Right cardiac atrium (tissue), 5 donors: ENCODE measurements at regions of chr18 and their contacts with region 1.

Region 1: DNA sequence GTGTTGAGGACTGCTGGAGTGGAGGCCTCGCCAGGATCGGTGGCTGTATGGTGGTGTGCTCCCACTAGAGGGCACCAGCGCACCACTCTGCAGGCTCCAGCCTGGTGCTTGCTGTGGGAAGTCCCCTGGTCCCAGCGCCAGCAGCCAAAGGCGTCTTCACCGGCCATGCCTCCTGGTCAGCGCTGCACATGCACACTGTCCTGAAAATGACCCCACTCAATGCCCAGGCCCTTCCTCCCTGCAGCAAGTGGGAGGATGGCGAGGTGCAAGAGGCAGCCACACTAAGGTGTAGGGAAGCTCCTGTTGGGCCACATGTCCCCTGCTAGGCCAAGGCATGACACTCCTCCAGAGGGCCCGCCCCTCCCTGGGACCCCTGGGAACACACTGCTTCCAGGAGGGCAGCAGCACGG is 136.5 kb downstream of the CTIF start:
- DNase-seq: peak; percentile 90 to 96 (median 95)
- ATAC-seq: peak; percentile 84 to 88
- H3K4me3 ChIP-seq: no peak overlapping the region
- H3K27ac ChIP-seq: no peak overlapping the region
- H3K4me1 ChIP-seq: peaks cover 19% of the 10 kb centered on the region
- H3K27me3 ChIP-seq: no peaks in the 10 kb centered on the region

Region 2: GRCh38 chr18:48167897-48168253 is 507.5 kb before region 1 on chr18:
- intact Hi-C with region 1: no loop called
- DNase-seq: peak; percentile 66 to 81 (median 74)
- ATAC-seq: peak; percentile 60
- H3K4me3 ChIP-seq: no peak overlapping the region
- H3K27ac ChIP-seq: no peak overlapping the region
- H3K4me1 ChIP-seq: peaks cover 19% of the 10 kb centered on the region
- H3K27me3 ChIP-seq: no peaks in the 10 kb centered on the region

Region 3: GRCh38 chr18:48367557-48367956 is 307.8 kb before region 1 on chr18:
- intact Hi-C with region 1: no loop called
- DNase-seq: no peak
- ATAC-seq: no peak
- H3K4me3 ChIP-seq: no peak overlapping the region
- H3K27ac ChIP-seq: no peak overlapping the region
- H3K4me1 ChIP-seq: no peaks in the 10 kb centered on the region
- H3K27me3 ChIP-seq: no peaks in the 10 kb centered on the region

Region 4: GRCh38 chr18:48868468-48869466 is 193.4 kb after region 1 on chr18:
- intact Hi-C with region 1: no loop called
- DNase-seq: peak in 1 of 3 donors; percentile 31
- ATAC-seq: no peak
- H3K4me3 ChIP-seq: no peak overlapping the region
- H3K27ac ChIP-seq: no peak overlapping the region
- H3K4me1 ChIP-seq: no peaks in the 10 kb centered on the region
- H3K27me3 ChIP-seq: no peaks in the 10 kb centered on the region

Region 5: DNA sequence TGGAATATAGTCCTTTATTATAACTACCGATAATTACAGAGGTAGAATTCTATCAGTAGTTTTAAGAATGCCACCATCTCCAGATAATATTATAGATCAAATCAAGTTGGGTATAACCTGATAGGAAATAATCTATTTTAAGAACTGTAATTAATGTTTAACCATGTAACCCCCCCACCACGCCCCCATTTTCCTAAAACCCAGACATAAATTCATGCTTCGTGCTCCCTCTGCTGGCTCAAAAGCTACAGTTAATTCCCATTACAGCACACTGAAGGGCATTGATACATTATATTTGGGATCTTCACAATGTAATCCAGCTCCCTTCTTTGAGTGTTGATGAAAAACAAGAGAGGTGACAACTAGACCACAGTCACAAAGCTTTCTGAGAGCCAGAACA is 503.4 kb after region 1 on chr18:
- intact Hi-C with region 1: loop called in 2 of 4 experiments (anchors 5 kb)
- DNase-seq: peak in 1 of 3 donors; percentile 18
- ATAC-seq: peak in 1 of 2 donors; percentile 62
- H3K4me3 ChIP-seq: no peak overlapping the region
- H3K27ac ChIP-seq: no peak overlapping the region
- H3K4me1 ChIP-seq: no peaks in the 10 kb centered on the region
- H3K27me3 ChIP-seq: no peaks in the 10 kb centered on the region

Region 6: DNA sequence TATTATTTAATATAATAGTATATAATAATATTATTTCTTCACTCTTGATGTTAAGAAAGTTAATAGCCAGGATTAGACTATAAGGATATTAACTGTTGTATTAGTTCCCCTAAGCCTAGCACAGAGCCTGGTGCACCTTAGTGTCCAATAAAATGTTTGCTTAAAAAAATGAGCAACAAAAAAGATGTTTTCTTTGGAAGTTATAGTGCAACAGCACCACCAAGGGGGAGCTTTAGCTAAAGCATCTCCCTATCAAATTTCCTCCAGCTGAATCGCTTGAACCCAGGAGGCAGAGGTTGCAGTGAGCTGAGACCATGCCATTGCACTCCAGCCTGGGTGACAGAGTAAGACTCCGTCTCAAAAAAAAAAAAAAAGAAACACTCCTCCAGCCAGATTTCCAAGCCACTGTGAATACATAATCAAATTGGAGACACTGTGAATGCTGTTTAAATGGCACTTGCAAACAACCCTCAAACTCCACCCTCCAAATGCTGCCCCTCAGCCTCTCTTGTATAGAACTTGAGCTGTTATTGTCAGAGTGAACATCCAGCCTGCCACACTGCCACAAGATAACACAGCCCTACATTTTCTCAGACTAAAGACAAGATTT is 563.2 kb after region 1 on chr18:
- intact Hi-C with region 1: loop called in 2 of 4 experiments (anchors 5 kb)
- DNase-seq: no peak
- ATAC-seq: no peak
- H3K4me3 ChIP-seq: no peak overlapping the region
- H3K27ac ChIP-seq: no peak overlapping the region
- H3K4me1 ChIP-seq: no peaks in the 10 kb centered on the region
- H3K27me3 ChIP-seq: no peaks in the 10 kb centered on the region

Region 7: GRCh38 chr18:49412679-49413078 is 737.3 kb after region 1 on chr18:
- intact Hi-C with region 1: loop called in 2 of 4 experiments (anchors 10 kb)
- DNase-seq: no peak
- ATAC-seq: no peak
- H3K4me3 ChIP-seq: no peak overlapping the region
- H3K27ac ChIP-seq: no peak overlapping the region
- H3K4me1 ChIP-seq: peaks cover 2% of the 10 kb centered on the region
- H3K27me3 ChIP-seq: no peaks in the 10 kb centered on the region